GM10248 (cell line): ENCODE measurements at regions of chr15 and their contacts with region 1.

Region 1: GRCh38 chr15:41230650-41231533 is at the starts of genes CHP1 and EXD1:
- DNase-seq: peak; percentile 98
- CTCF ChIP-seq: peak; percentile 91

Region 2: DNA sequence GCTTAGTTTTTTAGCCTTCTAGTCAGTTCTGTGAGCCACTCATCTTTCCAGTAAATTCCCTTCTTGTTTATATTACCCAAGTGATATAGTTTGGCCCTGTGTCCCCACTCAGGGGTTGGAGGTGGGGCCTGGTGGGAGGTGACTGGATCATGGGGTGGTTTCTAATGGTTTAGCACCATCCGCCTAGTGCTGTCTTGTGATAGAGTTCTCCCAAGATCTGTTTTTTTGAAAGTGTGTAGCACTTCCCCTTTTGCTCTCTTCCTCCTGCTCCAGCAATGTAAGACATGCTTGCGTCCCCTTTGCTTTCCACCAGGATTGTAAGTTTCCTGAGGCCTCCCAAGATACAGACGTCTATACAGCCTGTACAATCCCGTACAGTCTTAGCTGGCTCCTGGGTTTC is 61.1 kb before region 1 on chr15:
- CTCF ChIA-PET with region 1: no interaction called
- POLR2A ChIA-PET with region 1: no interaction called
- DNase-seq: no peak
- CTCF ChIP-seq: no peak

Region 3: DNA sequence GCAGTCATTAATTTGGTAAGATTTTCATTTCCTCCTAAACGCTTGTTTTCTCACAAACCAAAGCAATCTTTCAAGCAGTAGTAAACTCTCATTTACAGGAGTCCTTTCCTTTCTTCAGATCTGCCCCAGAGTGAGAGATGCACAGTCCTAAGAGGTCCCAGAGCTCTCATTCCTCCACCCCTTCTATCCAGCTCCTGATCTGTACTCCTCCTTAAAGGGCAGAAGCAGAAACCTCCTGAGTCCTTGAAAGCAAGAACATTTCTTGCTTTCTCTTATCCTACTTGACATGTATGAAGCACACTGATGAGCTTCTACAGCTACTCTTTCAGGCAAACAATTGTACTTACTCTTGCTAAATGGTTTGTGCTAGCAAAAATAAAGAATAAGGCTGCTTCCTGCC is 12.0 kb before region 1 on chr15:
- CTCF ChIA-PET with region 1: interaction called, 18 read pairs
- POLR2A ChIA-PET with region 1: no interaction called
- DNase-seq: no peak
- CTCF ChIP-seq: no peak

Region 4: GRCh38 chr15:41241221-41241964 is 10.5 kb after region 1 on chr15:
- CTCF ChIA-PET with region 1: interaction called, 22 read pairs
- POLR2A ChIA-PET with region 1: no interaction called
- DNase-seq: no peak
- CTCF ChIP-seq: no peak

Region 5: GRCh38 chr15:41263891-41264351 is 33.0 kb after region 1 on chr15:
- CTCF ChIA-PET with region 1: interaction called, 11 read pairs
- POLR2A ChIA-PET with region 1: no interaction called
- DNase-seq: no peak
- CTCF ChIP-seq: no peak